Activated CD4-positive, alpha-beta T cell treated with anti-CD3 and anti-CD28 coated beads, Interleukin-2, amount 10 ng/mL, durations not matched to agents 24 days and 14 days (primary cell): ENCODE measurements at regions of chr16 and their contacts with region 1.

Region 1: DNA sequence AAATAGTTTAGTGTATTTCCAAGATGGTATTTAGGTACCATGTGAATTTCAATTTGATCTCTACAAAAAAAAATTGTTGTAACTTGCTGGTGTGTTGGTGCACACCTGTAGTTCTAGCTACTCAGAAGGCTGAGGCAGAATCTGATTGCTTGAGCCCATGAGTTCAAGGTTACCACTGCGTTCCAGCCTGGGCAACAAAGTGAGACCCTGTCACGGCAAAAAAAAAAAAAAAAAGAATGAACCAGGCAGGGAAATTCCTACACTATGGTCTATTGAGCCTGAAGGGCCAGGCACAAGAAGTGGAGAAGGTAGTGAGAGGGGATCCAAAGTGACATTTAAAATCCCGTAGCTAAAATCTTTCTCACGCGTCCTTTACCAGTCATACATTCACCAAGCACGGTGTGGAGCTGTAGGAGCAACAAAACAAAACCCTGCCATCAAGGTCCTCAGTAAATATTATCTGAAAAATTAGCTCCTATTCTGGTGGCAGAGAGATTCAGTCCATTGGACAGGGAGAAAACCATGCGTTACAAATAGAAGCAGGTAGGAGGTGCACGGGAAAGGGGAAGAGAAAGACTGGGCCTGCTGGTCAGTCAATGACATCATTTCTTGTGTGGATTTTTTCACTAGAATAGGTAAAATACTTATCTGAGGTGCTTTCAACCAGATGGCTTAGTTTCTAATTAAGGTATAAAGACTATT is 27.3 kb downstream of the TXNDC11 start:
- DNase-seq: no peak
- H3K4me3 Mint-ChIP-seq: no peak overlapping the region
- H3K27ac Mint-ChIP-seq: no peak overlapping the region
- H3K4me1 Mint-ChIP-seq: peaks cover 5% of the 10 kb centered on the region
- H3K27me3 Mint-ChIP-seq: no peaks in the 10 kb centered on the region

Region 2: GRCh38 chr16:10957771-10958486 is 757.5 kb before region 1 on chr16:
- intact Hi-C with region 1: loop called (anchors 2 kb)
- DNase-seq: no peak
- H3K4me3 Mint-ChIP-seq: peak overlapping the region; percentile 1
- H3K27ac Mint-ChIP-seq: peak overlapping the region; percentile 60
- H3K4me1 Mint-ChIP-seq: peaks cover 52% of the 10 kb centered on the region
- H3K27me3 Mint-ChIP-seq: no peaks in the 10 kb centered on the region

Region 3: GRCh38 chr16:11396241-11397048 is 319.0 kb before region 1 on chr16:
- intact Hi-C with region 1: loop called (anchors 5 kb)
- DNase-seq: peak; percentile 91
- H3K4me3 Mint-ChIP-seq: no peak overlapping the region
- H3K27ac Mint-ChIP-seq: no peak overlapping the region
- H3K4me1 Mint-ChIP-seq: peaks cover 2% of the 10 kb centered on the region
- H3K27me3 Mint-ChIP-seq: no peaks in the 10 kb centered on the region

Region 4: GRCh38 chr16:11742539-11743307 is 27.3 kb after region 1 on chr16 and contains the start of gene TXNDC11:
- intact Hi-C with region 1: no loop called
- DNase-seq: peak; percentile 100
- H3K4me3 Mint-ChIP-seq: peak within 1 kb of the TSS; percentile 98
- H3K27ac Mint-ChIP-seq: peak within 1 kb of the TSS; percentile 97
- H3K4me1 Mint-ChIP-seq: peaks cover 48% of the 10 kb centered on the region
- H3K27me3 Mint-ChIP-seq: no peaks in the 10 kb centered on the region
- total RNA-seq, gene TXNDC11: 41.7 and 43.6 TPM in 2 replicates

Region 5: GRCh38 chr16:11757671-11758545 is 42.5 kb after region 1 on chr16:
- intact Hi-C with region 1: no loop called
- DNase-seq: no peak
- H3K4me3 Mint-ChIP-seq: no peak overlapping the region
- H3K27ac Mint-ChIP-seq: no peak overlapping the region
- H3K4me1 Mint-ChIP-seq: no peaks in the 10 kb centered on the region
- H3K27me3 Mint-ChIP-seq: no peaks in the 10 kb centered on the region